ENCODE measurements at regions of chr1 and their contacts with region 1.

Region 1: DNA sequence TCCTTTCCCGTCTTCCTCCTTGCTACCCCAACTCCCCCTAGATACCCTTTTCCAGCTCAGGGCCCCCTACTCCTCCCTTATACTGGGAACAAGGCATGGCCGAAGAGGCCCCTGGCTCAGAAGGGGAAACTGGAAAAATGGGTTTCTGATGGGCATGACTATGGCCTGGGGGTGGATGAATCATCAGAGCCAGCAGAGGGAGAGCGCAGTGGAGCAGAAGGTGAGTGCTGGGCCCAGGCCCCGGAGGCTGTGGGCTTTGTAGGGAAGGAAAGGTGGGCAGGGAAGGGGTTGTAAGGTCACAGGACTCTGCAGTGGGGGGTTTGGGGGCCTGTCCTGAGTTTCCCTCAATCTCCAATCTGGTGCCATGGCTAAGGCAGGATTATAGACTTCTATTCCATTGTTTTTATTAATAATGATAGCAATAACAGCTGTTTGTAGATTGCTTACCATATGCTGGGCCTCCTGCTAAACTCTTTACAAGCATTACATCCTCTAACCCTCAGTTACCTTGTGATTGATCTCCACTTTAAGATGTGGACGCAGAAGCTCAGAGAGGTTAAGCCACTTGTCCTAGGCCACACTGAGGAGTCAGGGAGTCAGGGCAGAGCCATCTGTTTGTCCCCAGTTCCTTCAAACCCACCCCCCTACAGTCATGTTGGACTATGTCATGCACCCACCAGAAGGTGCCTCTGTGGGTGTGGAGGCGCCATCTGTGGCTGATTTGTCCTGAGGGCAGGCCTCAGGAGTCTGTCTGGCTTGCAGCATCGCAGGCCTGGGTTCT is 36.2 kb upstream of the ZNF362 start:
- DNase-seq: no peak
- ATAC-seq: no peak
- H3K4me3 ChIP-seq: no peak overlapping the region
- H3K27ac ChIP-seq: no peak overlapping the region
- H3K4me1 ChIP-seq: no peaks in the 10 kb centered on the region
- H3K27me3 ChIP-seq: peaks cover 0 to 7% of the 10 kb centered on the region in 2 experiments; a peak in 1 of 5 replicates
- CTCF ChIP-seq: no peak
- EP300 ChIP-seq: no peak
- POLR2A ChIP-seq: no peak
- RAD21 ChIP-seq: no peak

Region 2: GRCh38 chr1:32666901-32667566 is 553.0 kb before region 1 on chr1:
- CTCF ChIA-PET with region 1: no interaction called
- POLR2A ChIA-PET with region 1: no interaction called
- in situ Hi-C with region 1: no loop called
- intact Hi-C with region 1: no loop called
- DNase-seq: peak in 1 of 4 experiments; percentile 34
- ATAC-seq: no peak; the same call in 2 of the 3 replicates
- H3K4me3 ChIP-seq: no peak overlapping the region
- H3K27ac ChIP-seq: no peak overlapping the region
- H3K4me1 ChIP-seq: no peaks in the 10 kb centered on the region
- H3K27me3 ChIP-seq: no peaks in the 10 kb centered on the region
- CTCF ChIP-seq: no peak
- EP300 ChIP-seq: no peak
- POLR2A ChIP-seq: no peak
- RAD21 ChIP-seq: no peak

Region 3: GRCh38 chr1:33176362-33176850 is 43.7 kb before region 1 on chr1:
- CTCF ChIA-PET with region 1: no interaction called
- POLR2A ChIA-PET with region 1: no interaction called
- in situ Hi-C with region 1: no loop called
- intact Hi-C with region 1: no loop called
- DNase-seq: no peak
- ATAC-seq: no peak
- H3K4me3 ChIP-seq: no peak overlapping the region
- H3K27ac ChIP-seq: no peak overlapping the region
- H3K4me1 ChIP-seq: peaks cover 9 to 15% of the 10 kb centered on the region in 2 experiments
- H3K27me3 ChIP-seq: peaks cover 0 to 12% of the 10 kb centered on the region in 2 experiments; a peak in 2 of 5 replicates
- CTCF ChIP-seq: no peak
- EP300 ChIP-seq: no peak
- POLR2A ChIP-seq: no peak
- RAD21 ChIP-seq: no peak

Region 4: GRCh38 chr1:33188572-33189275 is 31.3 kb before region 1 on chr1:
- CTCF ChIA-PET with region 1: no interaction called
- POLR2A ChIA-PET with region 1: no interaction called
- in situ Hi-C with region 1: no loop called
- intact Hi-C with region 1: no loop called
- DNase-seq: peak in 1 of 4 experiments; percentile 9
- ATAC-seq: no peak
- H3K4me3 ChIP-seq: no peak overlapping the region
- H3K27ac ChIP-seq: no peak overlapping the region
- H3K4me1 ChIP-seq: no peaks in the 10 kb centered on the region
- H3K27me3 ChIP-seq: peaks cover 16% of the 10 kb centered on the region in 2 experiments; a peak in 4 of 5 replicates
- CTCF ChIP-seq: no peak
- EP300 ChIP-seq: no peak
- POLR2A ChIP-seq: no peak
- RAD21 ChIP-seq: no peak

Region 5: GRCh38 chr1:33466159-33466558 is 246.1 kb after region 1 on chr1:
- CTCF ChIA-PET with region 1: no interaction called
- POLR2A ChIA-PET with region 1: no interaction called
- in situ Hi-C with region 1: no loop called
- intact Hi-C with region 1: loop called (anchors 5 kb)
- DNase-seq: no peak
- ATAC-seq: no peak
- H3K4me3 ChIP-seq: no peak overlapping the region
- H3K27ac ChIP-seq: no peak overlapping the region
- H3K4me1 ChIP-seq: peaks cover 0 to 5% of the 10 kb centered on the region in 2 experiments; a peak in 3 of 5 replicates
- H3K27me3 ChIP-seq: peaks cover 4 to 36% of the 10 kb centered on the region in 2 experiments; a peak in 3 of 5 replicates
- CTCF ChIP-seq: no peak
- EP300 ChIP-seq: no peak
- POLR2A ChIP-seq: no peak
- RAD21 ChIP-seq: no peak

Region 6: DNA sequence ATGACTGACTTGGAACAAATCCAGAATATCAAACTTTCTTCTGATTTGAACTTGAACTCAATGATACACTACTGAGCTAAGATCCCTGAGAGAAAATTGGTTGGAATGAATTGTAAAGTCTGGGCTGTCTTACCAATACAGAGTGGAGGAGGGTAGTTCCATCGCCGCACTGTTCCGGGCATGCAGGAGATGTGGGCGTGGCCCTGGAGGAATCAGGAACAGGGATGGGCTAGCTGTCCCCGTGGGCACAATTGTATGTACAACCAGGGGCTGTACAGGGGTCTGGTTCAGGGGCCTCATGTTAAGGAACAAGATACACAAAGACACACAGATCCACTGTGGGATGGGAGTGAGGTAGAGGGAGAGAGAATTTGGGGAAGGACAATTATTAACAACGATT is 396.7 kb after region 1 on chr1:
- CTCF ChIA-PET with region 1: no interaction called
- POLR2A ChIA-PET with region 1: no interaction called
- in situ Hi-C with region 1: no loop called
- intact Hi-C with region 1: loop called (anchors 10 kb)
- DNase-seq: peak in 1 of 4 experiments; percentile 23
- ATAC-seq: no peak
- H3K4me3 ChIP-seq: no peak overlapping the region
- H3K27ac ChIP-seq: no peak overlapping the region
- H3K4me1 ChIP-seq: no peaks in the 10 kb centered on the region
- H3K27me3 ChIP-seq: peaks cover 5 to 37% of the 10 kb centered on the region in 2 experiments
- CTCF ChIP-seq: no peak
- EP300 ChIP-seq: no peak
- POLR2A ChIP-seq: no peak
- RAD21 ChIP-seq: no peak